CD8-positive, alpha-beta memory T cell (primary cell): ENCODE measurements at regions of chr9 and their contacts with region 1.

Region 1: DNA sequence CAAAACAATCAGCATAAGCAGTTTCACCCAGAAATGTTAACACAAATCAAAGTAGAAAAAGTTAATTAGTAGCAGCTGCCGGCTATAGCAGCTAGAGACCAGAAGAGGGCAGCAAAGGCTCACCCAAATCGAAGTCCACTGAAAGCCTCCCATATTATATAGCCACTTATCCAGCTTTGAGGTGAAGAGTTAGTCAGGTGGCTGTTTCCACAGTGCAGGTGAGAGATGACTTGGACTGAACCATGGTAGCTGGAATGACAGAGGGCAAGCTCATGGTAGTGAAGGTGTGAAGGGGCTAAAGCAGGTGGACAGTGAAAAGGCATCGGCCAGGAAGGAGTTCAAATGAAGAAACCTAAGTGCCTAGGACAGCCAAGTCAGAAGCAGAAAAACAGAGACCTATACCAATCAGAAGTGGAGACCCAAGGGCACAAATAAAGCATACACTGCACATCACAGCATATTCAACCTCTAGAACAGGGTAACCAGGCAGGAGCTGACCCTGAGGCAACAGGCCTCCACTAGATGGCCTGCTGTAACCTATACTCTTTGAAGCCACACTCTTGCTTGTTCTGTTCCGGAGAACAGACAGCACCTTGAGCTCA is 7.2 kb upstream of the RNF38 start:
- DNase-seq: peak; percentile 32 to 72 (median 64)
- H3K4me3 ChIP-seq: no peak overlapping the region
- H3K4me3 Mint-ChIP-seq: peak overlapping the region in 1 of 7 donors; percentile 12
- H3K27ac ChIP-seq: no peak overlapping the region
- H3K27ac Mint-ChIP-seq: peak overlapping the region in 7 of 8 donors; percentile 27 to 94 (median 80)
- H3K4me1 ChIP-seq: peaks cover 6% of the 10 kb centered on the region
- H3K4me1 Mint-ChIP-seq: peaks cover 22 to 40% (median 26%) of the 10 kb centered on the region in 3 donors
- H3K27me3 ChIP-seq: no peaks in the 10 kb centered on the region
- H3K27me3 Mint-ChIP-seq: no peaks in the 10 kb centered on the region

Region 2: GRCh38 chr9:36364577-36364976 is 42.6 kb before region 1 on chr9:
- CTCF ChIA-PET with region 1: no interaction called
- POLR2A ChIA-PET with region 1: no interaction called
- DNase-seq: no peak
- H3K4me3 ChIP-seq: no peak overlapping the region
- H3K4me3 Mint-ChIP-seq: no peak overlapping the region
- H3K27ac ChIP-seq: no peak overlapping the region
- H3K27ac Mint-ChIP-seq: peak overlapping the region in 1 of 8 donors; percentile 27
- H3K4me1 ChIP-seq: no peaks in the 10 kb centered on the region
- H3K4me1 Mint-ChIP-seq: peaks cover 8 to 13% (median 10%) of the 10 kb centered on the region in 3 donors
- H3K27me3 ChIP-seq: no peaks in the 10 kb centered on the region
- H3K27me3 Mint-ChIP-seq: no peaks in the 10 kb centered on the region

Region 3: GRCh38 chr9:36457836-36458429 is 50.7 kb after region 1 on chr9:
- CTCF ChIA-PET with region 1: interaction called, 12 read pairs
- POLR2A ChIA-PET with region 1: no interaction called
- DNase-seq: no peak
- H3K4me3 ChIP-seq: peak overlapping the region; percentile 33
- H3K4me3 Mint-ChIP-seq: peak overlapping the region; percentile 40 to 91 (median 81)
- H3K27ac ChIP-seq: peak overlapping the region; percentile 8
- H3K27ac Mint-ChIP-seq: peak overlapping the region; percentile 85 to 99 (median 95)
- H3K4me1 ChIP-seq: peaks cover 44% of the 10 kb centered on the region
- H3K4me1 Mint-ChIP-seq: peaks cover 55 to 83% (median 77%) of the 10 kb centered on the region in 3 donors
- H3K27me3 ChIP-seq: no peaks in the 10 kb centered on the region
- H3K27me3 Mint-ChIP-seq: peaks cover 0 to 3% of the 10 kb centered on the region in 2 donors

Region 4: GRCh38 chr9:36728651-36729520 is 321.7 kb after region 1 on chr9:
- CTCF ChIA-PET with region 1: interaction called, 13 read pairs
- POLR2A ChIA-PET with region 1: no interaction called
- DNase-seq: peak; percentile 27 to 73 (median 54)
- H3K4me3 ChIP-seq: no peak overlapping the region
- H3K4me3 Mint-ChIP-seq: no peak overlapping the region
- H3K27ac ChIP-seq: no peak overlapping the region
- H3K27ac Mint-ChIP-seq: no peak overlapping the region
- H3K4me1 ChIP-seq: no peaks in the 10 kb centered on the region
- H3K4me1 Mint-ChIP-seq: peaks cover 0 to 5% (median 0%) of the 10 kb centered on the region in 3 donors
- H3K27me3 ChIP-seq: no peaks in the 10 kb centered on the region
- H3K27me3 Mint-ChIP-seq: peaks cover 0 to 4% of the 10 kb centered on the region in 2 donors